Mammary epithelial cell (primary cell): ENCODE measurements at regions of chr1 and their contacts with region 1.

Region 1: DNA sequence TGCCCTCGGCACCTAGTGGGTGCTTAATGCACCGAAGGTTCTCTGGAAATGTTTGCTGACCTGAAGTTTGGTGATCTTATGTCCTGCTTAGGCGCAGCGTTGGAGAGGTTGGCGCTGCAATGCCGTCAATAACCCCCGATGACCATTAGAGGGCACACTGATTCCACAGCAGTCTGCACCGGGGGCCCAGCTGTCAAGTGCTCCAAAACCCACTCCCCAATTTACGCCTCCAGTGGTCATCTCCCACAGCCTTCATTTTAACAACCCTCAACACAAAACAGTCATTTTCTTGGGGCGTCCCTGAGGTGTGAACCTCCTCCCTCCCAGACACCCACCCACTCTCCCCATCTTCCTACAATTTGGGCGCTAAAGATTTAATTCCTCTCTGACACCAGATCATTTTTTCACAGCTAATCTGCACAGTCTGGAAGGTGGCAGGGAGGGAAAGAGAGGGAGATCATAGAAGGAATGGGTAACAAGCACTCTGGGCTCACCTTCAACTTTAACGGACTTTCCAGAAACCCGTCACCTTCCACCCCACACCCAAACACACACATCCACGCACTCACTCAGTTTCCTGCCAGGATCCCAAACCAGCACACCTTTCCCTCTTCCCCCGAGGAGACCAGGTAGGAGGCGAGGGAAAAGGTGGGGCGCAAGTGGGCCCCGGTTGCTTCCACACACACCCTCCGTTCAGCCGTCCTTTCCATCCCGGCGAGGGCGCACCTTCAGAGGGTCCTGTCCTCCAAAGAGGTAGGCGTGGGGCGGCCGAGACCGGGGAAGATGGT is 576 bp upstream of the NPR1 start:
- DNase-seq: peak; percentile 29
- H3K4me3 ChIP-seq: peak overlapping the region; percentile 25 to 42 (median 30)
- H3K27ac ChIP-seq: no peak overlapping the region
- H3K4me1 ChIP-seq: peaks cover 19% of the 10 kb centered on the region
- H3K27me3 ChIP-seq: peaks cover 22% of the 10 kb centered on the region
- CTCF ChIP-seq: peak; percentile 91 to 95

Region 2: DNA sequence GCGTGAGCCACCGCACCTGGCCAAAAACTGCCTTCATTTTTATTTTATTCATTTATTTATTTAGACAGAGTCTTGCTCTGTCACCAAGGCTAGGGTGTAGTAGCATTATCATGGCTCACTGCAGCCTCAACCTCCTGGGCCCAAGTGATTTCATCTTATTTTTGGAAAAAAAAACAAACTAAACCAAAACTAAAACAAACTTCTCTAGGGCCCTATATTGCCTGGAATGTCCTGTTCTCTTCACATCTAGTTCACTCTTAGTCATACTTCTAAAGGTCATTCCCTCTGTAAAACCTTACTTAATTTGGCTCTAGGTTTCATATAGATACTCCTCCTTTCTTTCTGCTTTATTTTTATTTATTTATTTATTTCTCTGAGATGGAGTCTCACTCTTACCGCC is 328.2 kb after region 1 on chr1:
- CTCF ChIA-PET with region 1: no interaction called
- dilution Hi-C with region 1: loop called (anchors 10 kb)
- in situ Hi-C with region 1: no loop called
- intact Hi-C with region 1: no loop called
- DNase-seq: no peak
- H3K4me3 ChIP-seq: no peak overlapping the region
- H3K27ac ChIP-seq: no peak overlapping the region
- H3K4me1 ChIP-seq: peaks cover 3% of the 10 kb centered on the region
- H3K27me3 ChIP-seq: no peaks in the 10 kb centered on the region
- CTCF ChIP-seq: no peak